Activated CD4-positive, alpha-beta memory T cell treated with anti-CD3 and anti-CD28 coated beads for 36 hours (primary cell): ENCODE measurements at regions of chr10 and their contacts with region 1.

Region 1: GRCh38 chr10:31318854-31319601 is at the start of gene ZEB1:
- DNase-seq: peak; percentile 94
- H3K4me3 Mint-ChIP-seq: peak within 1 kb of the TSS; percentile 98
- H3K27ac Mint-ChIP-seq: peak within 1 kb of the TSS; percentile 99
- H3K4me1 Mint-ChIP-seq: peaks cover 32% of the 10 kb centered on the region
- H3K27me3 Mint-ChIP-seq: no peaks in the 10 kb centered on the region
- total RNA-seq, gene ZEB1: 33.9 to 37.8 TPM

Region 2: DNA sequence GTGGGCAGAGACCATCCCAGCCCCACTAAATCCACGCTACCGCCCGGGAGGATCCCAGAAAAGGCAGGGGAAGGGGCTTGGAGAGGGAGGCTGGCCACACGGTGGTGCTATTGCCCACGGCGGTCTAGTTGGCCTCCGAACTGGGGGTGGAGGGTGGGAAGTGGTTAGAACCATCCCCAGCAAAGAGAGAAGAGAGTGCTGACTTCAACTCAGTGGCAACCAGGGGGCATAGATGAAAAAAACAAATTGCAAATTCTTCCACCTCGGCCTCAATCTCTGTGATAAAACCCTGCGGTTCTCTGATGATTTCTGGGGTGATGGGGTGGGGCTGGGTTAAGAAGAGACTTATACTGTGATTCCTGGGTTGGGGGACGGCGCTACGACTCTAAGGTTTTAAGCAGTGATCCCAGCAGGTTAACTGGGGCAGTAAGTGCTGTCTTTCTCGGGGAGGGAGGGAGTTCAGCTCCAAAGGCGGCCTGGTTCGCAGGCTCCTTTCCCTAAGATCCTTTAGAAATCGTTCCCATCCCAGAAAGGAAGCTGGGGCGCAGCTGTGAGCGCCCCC is 535.0 kb before region 1 on chr10:
- CTCF ChIA-PET with region 1: interaction called, 5 read pairs
- POLR2A ChIA-PET with region 1: no interaction called
- intact Hi-C with region 1: loop called (anchors 2 kb)
- DNase-seq: peak; percentile 91
- H3K4me3 Mint-ChIP-seq: peak overlapping the region; percentile 62
- H3K27ac Mint-ChIP-seq: peak overlapping the region; percentile 45
- H3K4me1 Mint-ChIP-seq: peaks cover 18% of the 10 kb centered on the region
- H3K27me3 Mint-ChIP-seq: no peaks in the 10 kb centered on the region

Region 3: DNA sequence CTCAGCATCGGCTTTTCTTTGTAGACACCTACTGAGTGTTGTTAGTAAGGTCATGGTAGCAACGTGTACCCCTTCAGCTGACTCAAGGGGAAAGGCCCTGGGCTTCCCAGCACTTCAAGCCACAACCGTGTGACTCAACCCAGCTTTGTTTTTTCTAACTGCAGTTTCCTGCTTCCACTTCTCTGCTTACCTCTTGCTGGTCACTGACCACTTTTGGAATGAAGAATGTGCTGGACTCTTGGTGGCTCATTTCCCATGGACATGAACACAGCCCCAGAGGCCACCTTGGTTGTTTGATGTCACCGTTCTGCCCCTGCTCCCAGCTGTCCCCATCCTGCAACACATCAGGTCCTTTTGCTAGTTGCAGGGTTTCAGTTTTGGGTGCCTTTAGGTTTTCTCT is 217.9 kb before region 1 on chr10:
- CTCF ChIA-PET with region 1: no interaction called
- POLR2A ChIA-PET with region 1: interaction called, 5 read pairs
- intact Hi-C with region 1: loop called (anchors 2 kb)
- DNase-seq: peak; percentile 89
- H3K4me3 Mint-ChIP-seq: peak overlapping the region; percentile 8
- H3K27ac Mint-ChIP-seq: peak overlapping the region; percentile 92
- H3K4me1 Mint-ChIP-seq: peaks cover 48% of the 10 kb centered on the region
- H3K27me3 Mint-ChIP-seq: no peaks in the 10 kb centered on the region

Region 4: GRCh38 chr10:31340343-31340742 is 21.3 kb after region 1 on chr10:
- CTCF ChIA-PET with region 1: no interaction called
- POLR2A ChIA-PET with region 1: interaction called, 7 read pairs
- intact Hi-C with region 1: loop called (anchors 1 kb)
- DNase-seq: peak; percentile 38
- H3K4me3 Mint-ChIP-seq: no peak overlapping the region
- H3K27ac Mint-ChIP-seq: no peak overlapping the region
- H3K4me1 Mint-ChIP-seq: peaks cover 24% of the 10 kb centered on the region
- H3K27me3 Mint-ChIP-seq: no peaks in the 10 kb centered on the region

Region 5: DNA sequence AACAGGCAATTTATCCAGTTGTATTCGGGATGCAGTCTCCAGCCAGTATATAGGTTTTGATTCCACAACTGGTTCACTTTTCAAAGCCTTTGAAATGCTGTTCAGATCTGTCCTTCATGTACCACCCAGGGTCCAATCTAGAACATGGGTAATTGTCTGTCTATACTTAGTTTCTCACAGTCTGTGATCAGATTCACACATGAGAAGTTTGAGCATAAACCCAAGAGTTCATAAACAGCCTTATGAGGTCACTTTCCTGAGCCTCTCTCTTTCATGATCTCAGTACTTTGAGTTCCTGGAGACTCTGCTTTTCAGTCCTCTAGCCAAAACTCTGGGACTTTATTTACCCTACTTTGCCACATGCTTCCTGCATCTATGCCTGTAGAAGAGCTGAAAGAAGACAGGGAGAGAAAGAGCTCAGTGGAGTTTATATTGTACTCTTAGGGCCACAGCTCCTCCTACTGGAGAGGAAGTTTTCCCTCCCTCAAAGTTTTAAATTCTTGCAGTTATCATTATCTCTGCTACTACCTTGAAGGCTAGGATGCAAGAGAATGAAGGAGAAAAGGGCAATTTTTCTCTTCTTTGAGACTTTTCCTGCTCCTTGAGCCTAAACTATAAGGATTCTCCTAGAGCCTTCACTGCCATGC is 172.0 kb after region 1 on chr10:
- CTCF ChIA-PET with region 1: interaction called, 5 read pairs
- POLR2A ChIA-PET with region 1: no interaction called
- intact Hi-C with region 1: loop called (anchors 5 kb)
- DNase-seq: no peak
- H3K4me3 Mint-ChIP-seq: no peak overlapping the region
- H3K27ac Mint-ChIP-seq: no peak overlapping the region
- H3K4me1 Mint-ChIP-seq: no peaks in the 10 kb centered on the region
- H3K27me3 Mint-ChIP-seq: no peaks in the 10 kb centered on the region

Region 6: DNA sequence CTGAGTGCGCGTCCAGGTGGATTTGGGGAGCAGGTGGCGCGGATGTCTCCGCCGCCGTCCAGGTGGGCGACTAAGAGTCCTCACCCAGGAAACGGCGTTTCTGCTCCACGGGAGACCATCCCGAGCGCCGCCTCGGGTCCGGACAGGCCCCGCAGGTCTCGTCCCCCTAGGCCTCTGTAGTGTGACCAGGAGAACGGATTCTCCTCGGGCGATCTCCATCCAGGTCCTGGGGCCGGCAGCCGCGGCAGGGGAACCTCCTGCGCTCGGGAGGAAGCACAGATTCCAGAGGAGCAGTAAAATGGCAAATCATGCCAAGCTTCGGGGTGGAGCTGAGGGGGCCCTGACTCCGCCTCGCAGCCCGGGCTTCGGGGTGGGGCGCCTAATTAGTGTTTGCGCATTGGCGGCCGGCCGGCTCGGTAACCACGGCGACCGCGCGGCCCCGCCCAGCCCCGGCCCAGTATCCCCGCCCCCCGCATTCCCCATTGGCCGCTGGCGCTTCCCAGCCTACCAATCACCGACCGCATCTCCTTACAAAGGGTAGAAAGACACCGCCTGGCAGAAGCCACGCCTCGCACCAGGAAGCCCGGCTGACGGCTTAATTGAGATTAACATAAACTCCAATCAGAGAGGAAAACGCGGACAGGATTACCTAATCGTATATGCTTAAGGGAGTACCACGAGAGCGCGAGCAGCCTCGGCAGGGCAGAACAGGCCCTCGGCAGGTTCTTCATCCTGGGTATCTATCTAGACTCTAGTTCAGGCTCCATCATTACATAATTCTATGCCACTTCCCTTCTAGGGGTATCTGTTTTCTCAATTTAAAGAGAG is 441.0 kb after region 1 on chr10:
- CTCF ChIA-PET with region 1: no interaction called
- POLR2A ChIA-PET with region 1: interaction called, 3 read pairs
- intact Hi-C with region 1: loop called (anchors 1 kb)
- DNase-seq: peak; percentile 97
- H3K4me3 Mint-ChIP-seq: peak overlapping the region; percentile 96
- H3K27ac Mint-ChIP-seq: peak overlapping the region; percentile 91
- H3K4me1 Mint-ChIP-seq: peaks cover 10% of the 10 kb centered on the region
- H3K27me3 Mint-ChIP-seq: no peaks in the 10 kb centered on the region